ENCODE measurements at regions of chr1 and their contacts with region 1.

Region 1: DNA sequence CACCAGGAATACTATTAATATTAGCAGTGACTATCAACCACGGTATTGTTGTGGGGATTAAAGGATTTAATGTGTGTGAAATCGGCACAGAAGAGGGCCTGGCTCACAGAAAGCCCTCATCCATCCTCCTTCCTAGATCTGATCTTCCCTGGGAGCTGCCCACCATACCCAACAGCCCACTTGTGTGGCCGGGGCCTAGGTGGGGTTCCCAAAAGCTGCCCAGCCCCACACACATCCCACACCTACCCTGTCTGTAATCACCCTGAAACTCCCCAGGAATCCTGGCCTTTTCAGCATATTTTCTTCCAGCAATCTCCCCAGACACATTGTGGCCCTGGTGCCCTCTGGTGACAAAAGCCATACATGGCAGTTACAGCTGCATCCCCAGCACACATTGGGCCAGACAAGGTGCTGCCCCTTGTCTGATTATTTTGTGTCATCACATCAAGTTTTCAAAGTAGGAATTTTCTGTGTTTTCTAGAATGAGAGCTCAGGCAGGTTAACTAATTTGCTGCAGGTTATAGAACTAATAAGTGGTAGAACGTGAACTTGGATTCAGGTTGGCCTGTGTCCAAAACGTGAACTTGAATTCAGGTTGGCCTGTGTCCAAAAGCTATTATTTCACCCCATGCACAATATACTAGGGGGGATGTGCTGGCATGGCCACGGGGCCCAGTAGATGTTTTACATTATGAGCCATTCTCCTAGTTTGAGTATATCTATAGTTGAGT is 5.3 kb upstream of the SLC6A9 start:
- DNase-seq: peak; percentile 64
- ATAC-seq: peak; percentile 91
- H3K4me3 ChIP-seq: no peak overlapping the region
- H3K27ac ChIP-seq: no peak overlapping the region; the same call in 1 of the 2 replicates
- H3K4me1 ChIP-seq: peaks cover 16 to 17% of the 10 kb centered on the region in 2 experiments
- H3K27me3 ChIP-seq: no peaks in the 10 kb centered on the region
- CTCF ChIP-seq: peak in 2 of 3 experiments; percentile 91 to 95; a peak in 4 of 6 replicates
- POLR2A ChIP-seq: no peak
- RAD21 ChIP-seq: no peak

Region 2: GRCh38 chr1:43774359-43774758 is 262.2 kb before region 1 on chr1:
- CTCF ChIA-PET with region 1: no interaction called
- POLR2A ChIA-PET with region 1: no interaction called
- RAD21 ChIA-PET with region 1: no interaction called
- intact Hi-C with region 1: no loop called
- DNase-seq: no peak
- ATAC-seq: peak; percentile 70
- H3K4me3 ChIP-seq: no peak overlapping the region
- H3K27ac ChIP-seq: no peak overlapping the region
- H3K4me1 ChIP-seq: peaks cover 11 to 28% of the 10 kb centered on the region in 2 experiments; a peak in 3 of 4 replicates
- H3K27me3 ChIP-seq: no peaks in the 10 kb centered on the region
- CTCF ChIP-seq: no peak
- POLR2A ChIP-seq: no peak
- RAD21 ChIP-seq: no peak

Region 3: DNA sequence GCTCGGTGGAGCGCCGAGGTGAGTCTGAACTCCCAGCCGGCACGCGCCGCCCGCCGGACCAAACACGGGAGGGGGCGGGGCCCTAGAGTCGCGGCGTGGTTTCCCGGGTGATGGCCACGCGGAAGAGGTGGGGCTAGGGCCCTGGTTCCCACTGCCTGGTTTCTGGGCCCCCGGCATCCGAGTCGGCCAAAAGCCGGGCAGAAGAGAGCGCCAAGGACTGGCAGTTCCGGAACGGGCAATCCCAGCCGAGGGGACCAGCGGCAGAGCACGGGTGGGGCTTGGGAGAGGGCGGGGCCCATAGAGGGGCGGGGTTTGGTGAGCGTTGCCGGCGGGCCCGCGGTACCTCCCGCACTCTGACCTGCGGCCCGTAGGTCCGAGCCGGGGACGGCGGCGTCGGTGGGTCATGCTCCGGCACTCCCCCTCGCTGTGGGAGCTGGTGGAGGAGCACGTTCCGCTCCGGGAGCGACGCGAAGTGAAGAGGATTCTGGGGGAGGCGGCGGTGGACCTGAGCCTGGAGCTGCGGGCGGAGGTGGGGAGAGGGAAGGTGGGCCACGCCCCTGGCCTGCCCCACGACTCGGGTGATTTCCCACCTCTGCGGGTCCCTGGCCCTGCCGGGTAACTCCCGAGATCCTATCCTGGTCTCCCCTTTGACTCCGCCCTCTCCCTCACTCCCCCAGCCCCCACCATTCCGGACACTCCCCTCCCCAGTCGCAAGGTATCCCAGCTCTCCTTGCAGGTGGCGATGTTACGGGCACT is 44.9 kb before region 1 on chr1 and contains the start of gene CCDC24:
- CTCF ChIA-PET with region 1: interaction called, 7 read pairs
- POLR2A ChIA-PET with region 1: no interaction called
- RAD21 ChIA-PET with region 1: no interaction called
- intact Hi-C with region 1: loop called (anchors 1 kb)
- DNase-seq: peak; percentile 63
- ATAC-seq: peak; percentile 80
- H3K4me3 ChIP-seq: peak within 1 kb of the TSS; percentile 63 to 72
- H3K27ac ChIP-seq: peak within 1 kb of the TSS; percentile 82
- H3K4me1 ChIP-seq: peaks cover 10 to 39% of the 10 kb centered on the region in 2 experiments
- H3K27me3 ChIP-seq: no peaks in the 10 kb centered on the region
- CTCF ChIP-seq: no peak
- POLR2A ChIP-seq: peak; percentile 33
- RAD21 ChIP-seq: no peak
- total RNA-seq, gene CCDC24: 23.3 TPM

Region 4: DNA sequence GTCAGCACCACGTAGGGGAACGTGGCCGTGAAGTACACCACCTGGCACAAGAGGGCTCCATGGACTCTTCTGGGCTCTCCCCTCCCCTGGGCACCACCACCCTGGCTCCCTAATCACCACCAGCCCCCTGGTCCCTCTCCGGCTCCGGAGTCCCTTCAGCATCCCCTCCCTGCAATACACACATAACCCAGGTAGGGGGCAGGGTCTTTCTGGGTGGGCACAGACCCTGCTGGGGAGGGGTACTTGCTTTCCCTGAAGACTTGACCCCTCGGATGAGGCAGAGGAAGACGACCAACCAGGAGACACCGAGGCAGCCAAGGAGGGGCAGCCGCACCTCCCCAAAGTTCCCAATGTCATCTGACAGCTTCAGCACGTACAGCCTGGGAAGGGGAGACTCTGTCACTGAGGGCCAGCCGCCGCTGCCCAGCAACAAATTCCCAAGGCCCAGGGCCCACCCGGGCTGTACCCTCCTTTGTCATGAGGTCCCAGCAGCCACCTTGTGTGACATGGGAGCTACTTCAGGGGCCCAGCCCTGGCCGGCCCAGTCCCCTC is 33.9 kb before region 1 on chr1:
- CTCF ChIA-PET with region 1: interaction called, 46 read pairs
- POLR2A ChIA-PET with region 1: interaction called, 8 read pairs
- RAD21 ChIA-PET with region 1: interaction called, 5 to 10 read pairs
- intact Hi-C with region 1: loop called (anchors 1 kb)
- DNase-seq: no peak
- ATAC-seq: no peak
- H3K4me3 ChIP-seq: no peak overlapping the region
- H3K27ac ChIP-seq: no peak overlapping the region
- H3K4me1 ChIP-seq: peaks cover 0 to 4% of the 10 kb centered on the region in 2 experiments; a peak in 2 of 4 replicates
- H3K27me3 ChIP-seq: no peaks in the 10 kb centered on the region
- CTCF ChIP-seq: peak in 2 of 3 experiments; percentile 39 to 47; a peak in 4 of 6 replicates
- POLR2A ChIP-seq: no peak
- RAD21 ChIP-seq: no peak

Region 5: GRCh38 chr1:44021581-44022321 is 14.8 kb before region 1 on chr1:
- CTCF ChIA-PET with region 1: no interaction called
- POLR2A ChIA-PET with region 1: no interaction called
- RAD21 ChIA-PET with region 1: no interaction called
- intact Hi-C with region 1: no loop called
- DNase-seq: no peak
- ATAC-seq: peak; percentile 67
- H3K4me3 ChIP-seq: no peak overlapping the region
- H3K27ac ChIP-seq: no peak overlapping the region
- H3K4me1 ChIP-seq: peaks cover 0 to 2% of the 10 kb centered on the region in 2 experiments; a peak in 1 of 4 replicates
- H3K27me3 ChIP-seq: no peaks in the 10 kb centered on the region
- CTCF ChIP-seq: peak in 2 of 3 experiments; percentile 20 to 30; a peak in 2 of 6 replicates
- POLR2A ChIP-seq: no peak
- RAD21 ChIP-seq: no peak

Region 6: DNA sequence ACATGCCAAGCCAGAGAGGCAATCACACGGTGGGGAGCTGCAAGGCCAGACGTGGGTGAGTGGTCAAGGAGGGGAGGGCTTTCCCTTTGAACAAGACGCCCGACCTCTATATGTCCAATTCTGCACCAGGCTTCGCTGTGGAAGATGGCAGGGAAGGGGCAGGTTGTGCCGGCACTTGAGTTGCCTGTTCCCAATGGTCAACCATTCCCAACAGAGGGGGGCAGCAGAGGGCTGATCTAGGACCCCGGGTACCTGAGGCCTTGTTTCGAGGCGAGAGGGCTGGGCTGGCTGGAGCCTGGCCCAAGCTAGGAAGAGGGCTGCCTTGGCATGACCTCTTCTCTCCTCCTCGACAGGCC is 572.8 kb after region 1 on chr1:
- CTCF ChIA-PET with region 1: no interaction called
- POLR2A ChIA-PET with region 1: no interaction called
- RAD21 ChIA-PET with region 1: no interaction called
- intact Hi-C with region 1: no loop called
- DNase-seq: peak; percentile 10
- ATAC-seq: peak; percentile 82
- H3K4me3 ChIP-seq: no peak overlapping the region
- H3K27ac ChIP-seq: no peak overlapping the region
- H3K4me1 ChIP-seq: peaks cover 0 to under 1% of the 10 kb centered on the region in 2 experiments; a peak in 2 of 4 replicates
- H3K27me3 ChIP-seq: no peaks in the 10 kb centered on the region
- CTCF ChIP-seq: peak; percentile 18 to 46 (median 36); a peak in 3 of 6 replicates
- POLR2A ChIP-seq: no peak
- RAD21 ChIP-seq: peak; percentile 59